Activated CD8-positive, alpha-beta T cell treated with anti-CD3 and anti-CD28 coated beads, Interleukin-2, amount 10 ng/mL, durations not matched to agents 7 days and 5 days (primary cell): ENCODE measurements at regions of chr17 and their contacts with region 1.

Region 1: GRCh38 chr17:6666077-6666521 is 14.5 kb downstream of the C17orf100 start:
- DNase-seq: peak; percentile 57
- ATAC-seq: peak; percentile 72
- H3K4me3 Mint-ChIP-seq: no peak overlapping the region
- H3K27ac Mint-ChIP-seq: no peak overlapping the region
- H3K4me1 Mint-ChIP-seq: peaks cover 14% of the 10 kb centered on the region
- H3K27me3 Mint-ChIP-seq: peaks cover 19% of the 10 kb centered on the region

Region 2: GRCh38 chr17:6755731-6756184 is 89.7 kb after region 1 on chr17 and contains the start of gene XAF1:
- CTCF ChIA-PET with region 1: interaction called, 10 read pairs
- POLR2A ChIA-PET with region 1: interaction called, 3 read pairs
- DNase-seq: peak; percentile 81
- ATAC-seq: peak; percentile 78
- H3K4me3 Mint-ChIP-seq: peak within 1 kb of the TSS; percentile 93
- H3K27ac Mint-ChIP-seq: peak within 1 kb of the TSS; percentile 96
- H3K4me1 Mint-ChIP-seq: peaks cover 65% of the 10 kb centered on the region
- H3K27me3 Mint-ChIP-seq: no peaks in the 10 kb centered on the region
- total RNA-seq, gene XAF1: 298 to 306 TPM